Activated naive CD8-positive, alpha-beta T cell treated with anti-CD3 and anti-CD28 coated beads, Interleukin-2, amount 10 ng/mL, durations not matched to agents 7 days and 5 days (primary cell): ENCODE measurements at regions of chr1 and their contacts with region 1.

Region 1: GRCh38 chr1:28248283-28249012 is 10.9 kb upstream of the SESN2 start:
- DNase-seq: peak; percentile 82
- ATAC-seq: peak; percentile 23
- H3K4me3 Mint-ChIP-seq: peak overlapping the region; percentile 84
- H3K27ac Mint-ChIP-seq: peak overlapping the region; percentile 93
- H3K4me1 Mint-ChIP-seq: peaks cover 45% of the 10 kb centered on the region
- H3K27me3 Mint-ChIP-seq: no peaks in the 10 kb centered on the region

Region 2: GRCh38 chr1:28235755-28236655 is 12.4 kb before region 1 on chr1 and contains the start of gene ATP5IF1:
- POLR2A ChIA-PET with region 1: interaction called, 77 read pairs
- DNase-seq: peak; percentile 88
- ATAC-seq: peak; percentile 98
- H3K4me3 Mint-ChIP-seq: no peak within 1 kb of the TSS
- H3K27ac Mint-ChIP-seq: no peak within 1 kb of the TSS
- H3K4me1 Mint-ChIP-seq: peaks cover 7% of the 10 kb centered on the region
- H3K27me3 Mint-ChIP-seq: no peaks in the 10 kb centered on the region
- total RNA-seq, gene ATP5IF1: 209 to 222 TPM

Region 3: DNA sequence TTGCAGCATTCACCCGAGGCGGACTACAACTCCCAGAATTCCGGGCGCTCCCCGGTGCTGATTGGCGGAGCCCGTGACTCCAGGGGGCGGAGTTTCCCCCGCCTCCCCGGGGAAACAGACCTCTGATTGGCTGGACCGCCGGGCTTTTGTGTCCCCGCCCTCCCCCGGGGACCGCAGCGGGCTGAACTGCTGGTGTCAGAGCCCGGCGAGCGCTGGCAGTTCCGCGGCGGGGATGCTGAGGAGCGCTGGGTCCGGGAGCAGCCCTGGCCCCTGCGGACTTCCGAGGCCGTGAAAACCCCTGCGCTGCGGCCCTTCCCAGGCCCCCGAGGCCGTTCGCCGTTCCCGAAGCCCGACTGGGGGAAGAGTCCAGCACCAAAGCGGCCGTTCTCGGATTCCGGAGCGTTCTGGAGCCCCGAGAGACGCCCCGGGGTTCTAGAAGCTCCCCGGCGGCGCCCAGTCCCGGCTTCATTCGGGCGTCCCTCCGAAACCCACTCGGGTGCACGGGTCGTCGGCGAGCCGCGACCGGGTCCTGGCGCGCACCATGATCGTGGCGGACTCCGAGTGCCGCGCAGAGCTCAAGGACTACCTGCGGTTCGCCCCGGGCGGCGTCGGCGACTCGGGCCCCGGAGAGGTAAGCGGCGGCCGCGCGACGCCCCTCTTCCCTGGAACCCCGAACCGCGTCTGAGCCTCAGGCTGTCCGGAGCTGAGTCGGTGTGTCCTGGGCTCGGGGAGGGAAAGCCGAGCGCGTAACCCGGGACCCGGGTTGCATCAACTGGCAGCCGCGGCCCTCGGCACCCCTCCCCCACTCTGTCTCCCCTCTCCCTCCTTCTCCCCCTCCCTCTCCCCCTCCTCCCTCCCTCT is 11.1 kb after region 1 on chr1 and contains the start of gene SESN2:
- POLR2A ChIA-PET with region 1: interaction called, 122 read pairs
- DNase-seq: peak; percentile 99
- ATAC-seq: peak; percentile 88
- H3K4me3 Mint-ChIP-seq: peak within 1 kb of the TSS; percentile 79
- H3K27ac Mint-ChIP-seq: peak within 1 kb of the TSS; percentile 98
- H3K4me1 Mint-ChIP-seq: peaks cover 32% of the 10 kb centered on the region
- H3K27me3 Mint-ChIP-seq: no peaks in the 10 kb centered on the region
- total RNA-seq, gene SESN2: 14.6 to 16.0 TPM

Region 4: GRCh38 chr1:28329395-28330153 is 81.1 kb after region 1 on chr1:
- POLR2A ChIA-PET with region 1: interaction called, 63 read pairs
- DNase-seq: peak; percentile 68
- ATAC-seq: peak; percentile 6
- H3K4me3 Mint-ChIP-seq: peak overlapping the region; percentile 97
- H3K27ac Mint-ChIP-seq: peak overlapping the region; percentile 96
- H3K4me1 Mint-ChIP-seq: peaks cover 32% of the 10 kb centered on the region
- H3K27me3 Mint-ChIP-seq: no peaks in the 10 kb centered on the region

Region 5: DNA sequence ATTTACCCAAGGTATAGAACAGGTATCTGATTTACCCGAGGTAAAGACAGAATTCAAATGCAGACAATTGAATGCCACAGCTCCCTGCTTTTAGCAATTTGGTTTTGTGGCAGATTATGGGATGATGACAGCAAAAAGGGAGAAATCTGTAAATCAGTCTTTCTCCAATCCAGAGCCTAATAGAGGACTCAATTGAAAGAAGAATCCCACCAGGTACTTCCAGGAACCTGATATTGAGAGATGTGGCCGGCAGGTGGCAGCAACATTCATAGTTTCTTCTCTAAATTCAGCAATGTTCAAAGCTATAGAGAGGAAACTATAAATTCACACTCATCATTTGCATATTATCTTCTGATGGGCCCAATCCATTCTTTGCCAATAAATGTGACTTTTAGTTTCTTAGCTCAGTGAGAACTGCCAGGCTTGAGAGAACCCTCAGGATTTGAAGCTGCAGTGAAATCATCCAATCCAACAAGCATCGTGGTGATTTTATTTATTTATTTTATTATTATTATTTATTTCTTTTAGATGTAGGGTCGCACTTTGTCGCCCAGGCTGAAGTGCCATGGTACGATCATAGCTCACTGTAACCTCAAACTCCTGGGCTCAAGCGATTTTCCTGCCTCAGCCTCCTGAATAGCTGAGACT is 111.3 kb after region 1 on chr1:
- POLR2A ChIA-PET with region 1: interaction called, 16 read pairs
- DNase-seq: peak; percentile 69
- ATAC-seq: peak; percentile 75
- H3K4me3 Mint-ChIP-seq: no peak overlapping the region
- H3K27ac Mint-ChIP-seq: no peak overlapping the region
- H3K4me1 Mint-ChIP-seq: peaks cover 4% of the 10 kb centered on the region
- H3K27me3 Mint-ChIP-seq: peaks cover 12% of the 10 kb centered on the region

Region 6: GRCh38 chr1:28369371-28370238 is 121.2 kb after region 1 on chr1 and contains the start of gene PHACTR4:
- POLR2A ChIA-PET with region 1: interaction called, 10 read pairs
- DNase-seq: peak; percentile 85
- ATAC-seq: peak; percentile 90
- H3K4me3 Mint-ChIP-seq: peak within 1 kb of the TSS; percentile 92
- H3K27ac Mint-ChIP-seq: peak within 1 kb of the TSS; percentile 94
- H3K4me1 Mint-ChIP-seq: peaks cover 19% of the 10 kb centered on the region
- H3K27me3 Mint-ChIP-seq: peaks cover 4% of the 10 kb centered on the region
- total RNA-seq, gene PHACTR4: 28.3 to 29.7 TPM

Region 7: GRCh38 chr1:28505406-28506187 is 257.1 kb after region 1 on chr1 and contains the start of gene RCC1:
- POLR2A ChIA-PET with region 1: interaction called, 18 read pairs
- DNase-seq: peak; percentile 89
- ATAC-seq: peak; percentile 85
- H3K4me3 Mint-ChIP-seq: peak within 1 kb of the TSS; percentile 99
- H3K27ac Mint-ChIP-seq: peak within 1 kb of the TSS; percentile 99
- H3K4me1 Mint-ChIP-seq: peaks cover 27% of the 10 kb centered on the region
- H3K27me3 Mint-ChIP-seq: no peaks in the 10 kb centered on the region
- total RNA-seq, gene RCC1: 46.2 to 51.7 TPM